AG04449 (cell line): ENCODE measurements at regions of chr3 and their contacts with region 1.

Region 1: DNA sequence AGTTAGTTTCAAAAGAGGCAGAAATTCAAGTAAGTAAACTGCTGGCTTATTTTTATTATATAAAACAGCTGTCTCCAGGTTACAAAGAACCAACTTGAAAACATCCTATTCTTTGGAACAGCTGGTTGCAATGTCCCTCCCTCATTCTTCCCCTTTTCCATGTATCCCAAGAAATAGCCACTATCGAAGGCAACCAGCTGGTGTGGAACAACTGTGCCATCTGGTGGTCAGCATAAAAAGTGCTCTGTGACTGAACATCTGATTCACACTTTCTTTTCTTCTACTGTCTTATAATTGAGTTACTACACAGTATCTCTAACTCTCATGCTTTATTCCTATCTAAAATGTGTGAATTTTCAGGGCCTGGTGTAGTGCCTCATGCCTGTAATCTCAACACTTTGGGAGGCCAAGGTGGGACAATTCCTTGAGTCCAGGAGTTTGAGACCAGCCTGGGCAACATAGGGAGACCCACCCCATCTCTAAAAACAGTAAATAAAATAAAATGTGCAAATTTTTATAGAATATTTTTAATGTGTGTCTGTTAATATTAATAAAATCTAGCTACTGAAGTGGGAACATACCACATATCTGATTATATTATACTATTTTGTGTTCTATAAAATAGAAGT is 9.6 kb downstream of the OSBPL11 start:
- DNase-seq: no peak
- H3K4me3 ChIP-seq: no peak overlapping the region
- CTCF ChIP-seq: peak; percentile 81

Region 2: GRCh38 chr3:124928333-124929202 is 657.1 kb before region 1 on chr3:
- CTCF ChIA-PET with region 1: interaction called, 70 read pairs
- POLR2A ChIA-PET with region 1: no interaction called
- DNase-seq: no peak
- H3K4me3 ChIP-seq: no peak overlapping the region
- CTCF ChIP-seq: peak; percentile 75

Region 3: GRCh38 chr3:124941771-124942170 is 643.9 kb before region 1 on chr3:
- CTCF ChIA-PET with region 1: interaction called, 13 read pairs
- POLR2A ChIA-PET with region 1: no interaction called
- DNase-seq: no peak
- H3K4me3 ChIP-seq: no peak overlapping the region
- CTCF ChIP-seq: no peak

Region 4: GRCh38 chr3:124995460-124995994 is 590.2 kb before region 1 on chr3:
- CTCF ChIA-PET with region 1: interaction called, 12 read pairs
- POLR2A ChIA-PET with region 1: no interaction called
- DNase-seq: no peak
- H3K4me3 ChIP-seq: no peak overlapping the region
- CTCF ChIP-seq: peak; percentile 24

Region 5: DNA sequence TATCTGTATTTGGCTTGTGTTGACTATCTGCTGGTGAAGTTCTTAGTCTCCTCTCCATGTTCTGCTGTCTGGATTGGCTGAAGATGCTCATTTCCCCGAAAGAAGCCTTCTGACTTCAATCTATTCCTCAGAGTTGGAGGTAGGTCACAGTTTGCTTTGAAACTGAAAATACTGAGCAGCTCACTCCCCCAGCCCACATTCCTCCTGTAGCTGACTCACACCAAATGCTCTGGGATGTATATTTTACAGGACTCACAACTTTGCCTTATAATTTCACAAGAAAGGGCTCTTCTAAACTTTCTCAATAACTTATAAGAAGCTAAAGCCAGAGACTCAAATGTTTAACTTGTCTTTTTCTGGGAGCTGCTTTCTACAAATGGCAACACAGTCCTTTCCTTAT is 29.4 kb before region 1 on chr3:
- CTCF ChIA-PET with region 1: interaction called, 11 read pairs
- POLR2A ChIA-PET with region 1: no interaction called
- DNase-seq: peak; percentile 26
- H3K4me3 ChIP-seq: no peak overlapping the region
- CTCF ChIP-seq: no peak

Region 6: GRCh38 chr3:125573216-125573615 is 12.5 kb before region 1 on chr3:
- CTCF ChIA-PET with region 1: interaction called, 17 read pairs
- POLR2A ChIA-PET with region 1: no interaction called
- DNase-seq: no peak
- H3K4me3 ChIP-seq: no peak overlapping the region
- CTCF ChIP-seq: no peak